Activated CD8-positive, alpha-beta memory T cell treated with anti-CD3 and anti-CD28 coated beads, Interleukin-2, amount 10 ng/mL, durations not matched to agents 7 days and 5 days (primary cell): ENCODE measurements at regions of chr5 and their contacts with region 1.

Region 1: GRCh38 chr5:177311723-177312648 is at the start of gene MXD3:
- DNase-seq: peak; percentile 99
- ATAC-seq: peak; percentile 88
- H3K4me3 Mint-ChIP-seq: peak within 1 kb of the TSS; percentile 97
- H3K27ac Mint-ChIP-seq: peak within 1 kb of the TSS; percentile 95
- H3K4me1 Mint-ChIP-seq: peaks cover 52% of the 10 kb centered on the region
- H3K27me3 Mint-ChIP-seq: no peaks in the 10 kb centered on the region
- total RNA-seq, gene MXD3: 60.2 to 117 TPM

Region 2: DNA sequence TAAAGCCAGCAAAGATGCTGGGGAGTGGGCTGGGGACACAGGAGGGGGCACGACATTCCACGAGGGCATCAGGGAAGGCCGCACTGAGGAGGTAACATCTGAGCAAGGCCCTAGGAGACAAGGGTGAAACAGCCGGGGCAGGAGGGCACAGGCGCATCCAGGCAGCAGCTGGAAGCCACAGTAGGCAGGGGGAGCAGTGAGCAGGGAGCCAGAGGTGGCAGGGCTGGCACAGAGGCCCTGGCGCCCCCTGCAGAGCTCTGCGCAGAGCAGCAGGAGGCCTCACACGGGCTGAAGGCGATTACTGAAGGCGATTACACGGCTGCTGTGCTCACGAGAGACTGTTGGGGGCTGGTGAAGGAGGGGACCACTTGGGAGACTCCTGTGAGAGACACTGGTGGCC is 24.1 kb after region 1 on chr5:
- CTCF ChIA-PET with region 1: interaction called, 10 read pairs
- DNase-seq: no peak
- ATAC-seq: peak; percentile 63
- H3K4me3 Mint-ChIP-seq: no peak overlapping the region
- H3K27ac Mint-ChIP-seq: no peak overlapping the region
- H3K4me1 Mint-ChIP-seq: peaks cover 27% of the 10 kb centered on the region
- H3K27me3 Mint-ChIP-seq: no peaks in the 10 kb centered on the region

Region 3: DNA sequence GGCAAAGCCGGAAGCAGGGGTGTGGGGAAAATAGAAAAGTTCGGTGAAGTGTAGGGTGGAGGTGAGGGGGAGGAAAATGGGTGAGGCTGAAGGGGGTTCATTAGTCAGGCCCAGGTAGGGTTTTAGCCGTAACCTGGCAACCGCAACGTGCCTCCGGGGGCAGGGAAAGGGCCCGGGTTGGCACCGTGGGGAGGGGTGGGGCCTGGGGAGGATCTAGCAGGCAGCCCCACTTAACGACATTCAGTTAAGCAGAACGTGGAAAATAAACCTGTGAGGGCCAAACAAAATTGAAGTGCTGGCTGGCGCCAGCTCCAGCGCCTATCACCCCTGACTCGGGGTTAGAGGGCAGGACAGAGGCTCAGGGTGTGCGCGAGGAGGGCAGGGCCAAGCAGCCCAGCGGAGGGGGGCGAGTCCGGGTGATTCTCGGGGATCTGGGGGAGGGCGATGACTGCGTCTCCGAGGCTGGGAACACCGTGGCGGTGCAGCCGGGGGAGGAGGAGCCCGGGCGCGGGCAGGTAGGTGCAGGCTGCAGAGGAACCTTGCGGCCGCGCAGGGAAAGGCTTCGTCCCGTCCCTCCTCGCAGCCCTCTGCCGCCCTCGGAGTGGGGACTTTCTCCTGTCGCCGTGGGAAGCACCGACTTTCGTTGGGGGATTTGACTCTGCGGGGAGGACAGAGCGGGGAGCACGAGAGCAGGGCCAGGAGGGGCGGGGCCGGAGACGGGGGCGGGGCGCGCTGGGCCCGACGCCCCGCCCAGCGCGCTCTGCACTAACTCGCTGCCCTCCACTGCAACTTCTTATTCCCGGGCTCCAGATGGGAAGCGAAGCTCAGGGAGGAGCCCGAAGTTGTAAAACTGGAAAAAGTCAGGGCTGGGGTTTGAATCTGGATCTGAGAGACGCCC is 50.9 kb after region 1 on chr5:
- CTCF ChIA-PET with region 1: interaction called, 21 read pairs
- DNase-seq: peak; percentile 68
- ATAC-seq: peak; percentile 75
- H3K4me3 Mint-ChIP-seq: peak overlapping the region; percentile 74
- H3K27ac Mint-ChIP-seq: peak overlapping the region; percentile 64
- H3K4me1 Mint-ChIP-seq: peaks cover 71% of the 10 kb centered on the region
- H3K27me3 Mint-ChIP-seq: no peaks in the 10 kb centered on the region

Region 4: GRCh38 chr5:177425801-177426565 is 114.0 kb after region 1 on chr5:
- CTCF ChIA-PET with region 1: interaction called, 12 read pairs
- DNase-seq: peak; percentile 100
- ATAC-seq: peak; percentile 87
- H3K4me3 Mint-ChIP-seq: peak overlapping the region; percentile 85
- H3K27ac Mint-ChIP-seq: peak overlapping the region; percentile 98
- H3K4me1 Mint-ChIP-seq: peaks cover 45% of the 10 kb centered on the region
- H3K27me3 Mint-ChIP-seq: no peaks in the 10 kb centered on the region